CD8-positive, alpha-beta T cell (primary cell): ENCODE measurements at regions of chr10 and their contacts with region 1.

Region 1: GRCh38 chr10:11260170-11260569 is 242.5 kb downstream of the CELF2 start:
- DNase-seq: no peak
- ATAC-seq: no peak
- H3K4me3 ChIP-seq: no peak overlapping the region
- H3K4me3 Mint-ChIP-seq: no peak overlapping the region
- H3K27ac ChIP-seq: no peak overlapping the region
- H3K27ac Mint-ChIP-seq: peak overlapping the region; percentile 71
- H3K4me1 ChIP-seq: peaks cover 44% of the 10 kb centered on the region
- H3K4me1 Mint-ChIP-seq: peaks cover 84% of the 10 kb centered on the region
- H3K27me3 ChIP-seq: no peaks in the 10 kb centered on the region
- H3K27me3 Mint-ChIP-seq: no peaks in the 10 kb centered on the region
- CTCF ChIP-seq: no peak

Region 2: DNA sequence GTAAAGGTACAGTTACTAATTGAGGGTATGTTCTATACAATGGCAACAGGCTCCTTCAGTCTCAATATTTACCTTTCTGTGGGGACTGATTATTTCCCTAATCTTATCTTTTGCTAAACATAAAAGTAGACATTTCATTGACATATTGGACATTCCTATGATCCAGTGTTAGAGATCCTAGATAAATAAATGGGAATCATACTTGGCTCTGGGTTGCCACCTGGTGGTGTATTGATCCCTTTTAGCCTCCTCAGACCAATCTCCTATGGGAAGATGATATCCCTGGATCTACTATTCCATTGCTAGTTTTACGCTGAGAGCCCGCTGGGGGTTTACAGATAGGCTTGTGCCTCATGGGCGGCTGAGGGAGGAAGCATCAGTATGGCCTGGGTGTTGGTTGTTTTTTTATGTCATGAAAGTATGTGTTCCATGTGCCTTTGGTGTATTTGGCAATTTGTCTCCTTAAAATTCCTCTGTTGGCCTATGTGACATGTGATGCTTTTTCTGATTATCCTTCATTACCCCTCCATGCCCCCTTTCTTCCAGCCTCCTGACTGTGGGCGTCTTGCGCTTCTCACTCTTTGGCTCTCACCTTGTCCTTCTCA is 223.7 kb before region 1 on chr10:
- CTCF ChIA-PET with region 1: no interaction called
- POLR2A ChIA-PET with region 1: no interaction called
- intact Hi-C with region 1: no loop called
- DNase-seq: no peak
- ATAC-seq: no peak
- H3K4me3 ChIP-seq: no peak overlapping the region
- H3K4me3 Mint-ChIP-seq: no peak overlapping the region
- H3K27ac ChIP-seq: no peak overlapping the region
- H3K27ac Mint-ChIP-seq: no peak overlapping the region
- H3K4me1 ChIP-seq: no peaks in the 10 kb centered on the region
- H3K4me1 Mint-ChIP-seq: no peaks in the 10 kb centered on the region
- H3K27me3 ChIP-seq: peaks cover 0 to 3% of the 10 kb centered on the region in 2 experiments
- H3K27me3 Mint-ChIP-seq: peaks cover 12% of the 10 kb centered on the region
- CTCF ChIP-seq: no peak

Region 3: GRCh38 chr10:11218395-11218794 is 41.8 kb before region 1 on chr10:
- CTCF ChIA-PET with region 1: interaction called, 3 read pairs
- POLR2A ChIA-PET with region 1: interaction called, 4 read pairs
- intact Hi-C with region 1: loop called in 1 of 2 experiments (anchors 5 kb)
- DNase-seq: no peak
- ATAC-seq: peak; percentile 65
- H3K4me3 ChIP-seq: no peak overlapping the region
- H3K4me3 Mint-ChIP-seq: no peak overlapping the region
- H3K27ac ChIP-seq: peak overlapping the region in 1 of 2 experiments; percentile 0
- H3K27ac Mint-ChIP-seq: peak overlapping the region; percentile 80
- H3K4me1 ChIP-seq: peaks cover 61% of the 10 kb centered on the region
- H3K4me1 Mint-ChIP-seq: peaks cover 91% of the 10 kb centered on the region
- H3K27me3 ChIP-seq: no peaks in the 10 kb centered on the region
- H3K27me3 Mint-ChIP-seq: no peaks in the 10 kb centered on the region
- CTCF ChIP-seq: no peak